Tibial artery (tissue), 4 donors: ENCODE measurements at regions of chr2 and their contacts with region 1.

Region 1: DNA sequence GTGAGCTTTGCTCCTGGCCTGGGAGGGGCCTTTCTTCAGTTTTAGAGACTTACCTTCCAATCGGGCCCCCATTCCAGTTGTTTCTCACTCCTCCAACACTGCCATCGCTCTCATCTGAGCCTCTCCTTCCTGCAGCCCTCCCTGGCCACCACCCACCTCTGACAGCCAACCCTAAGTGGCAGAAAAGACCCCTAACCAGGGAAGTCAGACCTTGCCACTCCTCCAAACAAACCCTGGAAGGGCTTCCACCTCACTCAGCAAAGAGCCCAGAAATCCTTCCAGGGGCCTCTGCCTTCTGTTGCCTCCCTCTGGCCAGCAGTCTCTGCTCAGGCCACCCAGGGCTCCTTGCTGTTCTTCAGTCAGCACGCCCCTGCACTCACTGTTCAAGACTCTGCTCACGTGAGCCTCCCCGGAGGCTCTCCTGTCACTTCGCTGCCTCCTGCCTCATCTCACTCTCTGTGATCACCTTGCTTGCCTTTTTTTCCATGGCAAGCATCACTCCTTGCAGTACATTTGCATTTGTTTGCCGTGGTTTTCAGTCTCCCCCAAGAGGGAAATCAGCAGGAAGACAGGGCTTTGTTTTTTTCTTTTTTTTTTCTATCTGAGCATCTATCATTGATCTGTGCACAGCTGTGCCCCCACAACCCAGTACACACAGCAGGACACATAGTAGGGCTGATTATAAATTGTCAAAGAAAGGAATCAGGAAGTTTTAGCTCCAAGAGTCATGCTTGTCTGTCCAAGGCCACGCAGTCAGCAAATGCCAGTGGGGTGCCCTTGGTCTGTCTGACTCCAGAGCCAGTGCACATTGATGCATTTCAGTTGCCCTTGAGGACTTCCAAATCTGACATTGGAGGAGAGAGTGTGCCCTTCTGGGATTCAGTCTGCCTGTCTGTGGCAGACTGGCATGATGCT is 83.9 kb downstream of the INHBB start:
- DNase-seq: peak; percentile 7 to 48
- H3K4me3 ChIP-seq: no peak overlapping the region
- H3K27ac ChIP-seq: no peak overlapping the region
- H3K4me1 ChIP-seq: no peaks in the 10 kb centered on the region
- H3K27me3 ChIP-seq: peaks cover 0 to 11% of the 10 kb centered on the region in 2 donors
- CTCF ChIP-seq: no peak

Region 2: GRCh38 chr2:120350801-120351320 is 79.0 kb before region 1 on chr2:
- intact Hi-C with region 1: no loop called
- DNase-seq: no peak
- H3K4me3 ChIP-seq: no peak overlapping the region
- H3K27ac ChIP-seq: no peak overlapping the region
- H3K4me1 ChIP-seq: peaks cover 0 to 20% (median 17%) of the 10 kb centered on the region in 4 donors
- H3K27me3 ChIP-seq: no peaks in the 10 kb centered on the region
- CTCF ChIP-seq: no peak

Region 3: DNA sequence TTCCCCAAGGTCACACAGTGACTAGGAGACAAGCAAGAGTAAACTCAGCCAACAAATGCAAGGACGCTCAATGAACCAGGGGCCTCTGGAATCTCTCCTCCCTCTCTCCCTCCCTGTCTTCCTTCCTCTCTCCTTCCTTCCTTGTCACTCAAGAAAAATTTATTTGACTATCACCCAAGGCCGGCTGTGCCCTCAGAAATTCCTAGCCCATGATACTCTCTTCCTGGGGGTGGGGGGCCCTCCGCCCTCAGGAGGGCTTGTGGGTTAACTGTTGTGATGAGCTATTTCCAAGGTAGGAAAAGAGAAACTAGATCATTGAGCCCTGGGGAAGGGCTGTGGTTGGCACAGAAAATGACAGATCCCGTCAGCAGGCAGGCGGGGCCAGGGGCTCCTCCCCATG is 62.2 kb before region 1 on chr2:
- intact Hi-C with region 1: loop called (anchors 10 kb)
- DNase-seq: no peak
- H3K4me3 ChIP-seq: no peak overlapping the region
- H3K27ac ChIP-seq: no peak overlapping the region
- H3K4me1 ChIP-seq: no peaks in the 10 kb centered on the region
- H3K27me3 ChIP-seq: no peaks in the 10 kb centered on the region
- CTCF ChIP-seq: no peak